Activated T-helper 2 cell treated with anti-CD3 and anti-CD28 coated beads, Interferon-gamma antibody, Interleukin-2, Interleukin-4, amounts not matched to agents 10 μg/mL and 5 μg/mL and 100 μg/mL, durations not matched to agents 14 hours and 24 hours and 36 hours (primary cell): ENCODE measurements at regions of chr21 and their contacts with region 1.

Region 1: DNA sequence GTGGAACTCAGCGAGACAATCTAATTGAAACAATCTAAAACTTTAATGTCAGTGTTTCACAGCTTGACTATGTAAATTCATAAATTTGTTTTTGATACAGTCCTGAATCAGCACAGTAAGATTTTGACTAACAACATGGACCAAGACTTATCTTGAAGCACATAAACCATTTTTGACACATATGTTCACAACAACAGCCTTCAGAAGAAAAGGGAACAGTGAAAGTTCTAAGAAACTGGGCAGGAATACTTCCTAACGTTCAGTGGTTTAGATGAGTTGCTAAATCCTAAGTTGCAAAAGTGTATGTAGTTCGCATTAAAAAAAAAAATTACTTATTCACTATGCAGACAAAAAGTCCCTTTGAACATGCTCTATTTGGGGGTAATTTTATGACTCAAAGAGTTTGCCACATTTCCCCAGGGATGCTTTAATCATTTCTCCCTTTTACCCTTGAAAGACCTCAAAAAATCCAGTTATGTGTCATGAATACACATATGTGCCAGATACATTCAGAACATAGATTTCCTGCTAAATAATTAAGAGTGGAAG is 120.2 kb downstream of the MRPL39 start:
- DNase-seq: no peak
- H3K4me3 Mint-ChIP-seq: peak overlapping the region; percentile 35
- H3K27ac Mint-ChIP-seq: peak overlapping the region; percentile 83
- H3K4me1 Mint-ChIP-seq: peaks cover 61% of the 10 kb centered on the region
- H3K27me3 Mint-ChIP-seq: no peaks in the 10 kb centered on the region

Region 2: DNA sequence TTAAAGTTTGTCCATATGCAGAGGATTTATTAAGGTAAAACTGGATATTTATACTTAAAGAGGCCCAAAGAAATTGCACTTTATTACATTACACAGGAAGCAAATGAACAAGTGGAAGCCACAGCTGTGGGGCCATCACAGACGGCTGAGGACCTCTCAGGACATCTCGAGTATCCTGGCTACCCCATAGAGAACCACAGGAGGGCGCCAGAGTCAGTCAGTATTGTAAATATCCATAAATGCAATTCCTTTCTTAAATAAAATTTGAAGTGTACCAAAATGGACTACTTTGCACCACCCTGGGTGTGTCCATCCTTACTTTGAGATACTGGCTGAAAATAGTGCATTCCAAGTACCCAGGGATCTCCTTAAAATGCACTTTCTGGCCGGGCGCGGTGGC is 137.1 kb before region 1 on chr21:
- intact Hi-C with region 1: no loop called
- DNase-seq: no peak
- H3K4me3 Mint-ChIP-seq: no peak overlapping the region
- H3K27ac Mint-ChIP-seq: no peak overlapping the region
- H3K4me1 Mint-ChIP-seq: peaks cover 2% of the 10 kb centered on the region
- H3K27me3 Mint-ChIP-seq: peaks cover 5% of the 10 kb centered on the region

Region 3: DNA sequence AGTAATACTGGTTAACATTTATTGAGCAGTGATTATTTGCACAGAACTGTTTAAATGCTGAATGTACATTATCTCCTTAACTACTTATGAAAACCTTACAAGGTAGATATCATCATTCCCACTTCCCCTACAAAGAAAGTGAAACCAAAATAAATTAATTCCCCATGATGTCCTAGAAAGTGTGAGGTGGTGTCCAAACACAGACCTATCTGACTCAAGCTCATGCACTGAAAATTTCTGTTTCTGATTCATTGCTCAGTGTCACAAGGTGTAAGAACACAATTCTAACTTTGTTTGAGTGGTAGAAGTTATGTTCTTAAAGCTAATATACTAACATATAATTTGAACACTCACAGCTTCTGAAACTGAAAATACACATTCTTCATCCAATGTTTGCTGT is 58.6 kb before region 1 on chr21:
- intact Hi-C with region 1: loop called (anchors 1 kb)
- DNase-seq: no peak
- H3K4me3 Mint-ChIP-seq: peak overlapping the region; percentile 40
- H3K27ac Mint-ChIP-seq: peak overlapping the region; percentile 53
- H3K4me1 Mint-ChIP-seq: peaks cover 47% of the 10 kb centered on the region
- H3K27me3 Mint-ChIP-seq: no peaks in the 10 kb centered on the region

Region 4: GRCh38 chr21:25464275-25464674 is 22.8 kb before region 1 on chr21:
- intact Hi-C with region 1: loop called (anchors 1 kb)
- DNase-seq: no peak
- H3K4me3 Mint-ChIP-seq: no peak overlapping the region
- H3K27ac Mint-ChIP-seq: peak overlapping the region; percentile 93
- H3K4me1 Mint-ChIP-seq: peaks cover 60% of the 10 kb centered on the region
- H3K27me3 Mint-ChIP-seq: no peaks in the 10 kb centered on the region

Region 5: DNA sequence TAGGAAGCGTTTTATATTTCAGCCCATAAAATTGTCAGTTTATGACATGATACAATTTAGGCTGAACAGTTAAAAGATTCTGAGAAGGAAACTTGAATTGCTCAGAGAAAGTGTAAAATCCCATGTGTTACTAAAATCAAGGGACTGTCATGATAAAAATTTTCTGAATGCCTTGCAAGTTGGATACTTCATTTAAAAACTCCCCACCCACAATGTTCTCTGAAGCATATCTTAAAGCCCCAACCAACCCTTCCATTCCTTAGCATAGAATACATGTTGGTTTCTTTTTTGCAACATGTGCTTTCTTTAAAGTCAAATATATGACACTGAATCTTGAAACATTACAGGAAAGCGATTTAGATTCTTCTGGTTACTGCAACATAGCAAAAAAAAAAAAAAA is 22.7 kb after region 1 on chr21:
- intact Hi-C with region 1: loop called (anchors 1 kb)
- DNase-seq: no peak
- H3K4me3 Mint-ChIP-seq: peak overlapping the region; percentile 27
- H3K27ac Mint-ChIP-seq: peak overlapping the region; percentile 63
- H3K4me1 Mint-ChIP-seq: peaks cover 51% of the 10 kb centered on the region
- H3K27me3 Mint-ChIP-seq: no peaks in the 10 kb centered on the region

Region 6: DNA sequence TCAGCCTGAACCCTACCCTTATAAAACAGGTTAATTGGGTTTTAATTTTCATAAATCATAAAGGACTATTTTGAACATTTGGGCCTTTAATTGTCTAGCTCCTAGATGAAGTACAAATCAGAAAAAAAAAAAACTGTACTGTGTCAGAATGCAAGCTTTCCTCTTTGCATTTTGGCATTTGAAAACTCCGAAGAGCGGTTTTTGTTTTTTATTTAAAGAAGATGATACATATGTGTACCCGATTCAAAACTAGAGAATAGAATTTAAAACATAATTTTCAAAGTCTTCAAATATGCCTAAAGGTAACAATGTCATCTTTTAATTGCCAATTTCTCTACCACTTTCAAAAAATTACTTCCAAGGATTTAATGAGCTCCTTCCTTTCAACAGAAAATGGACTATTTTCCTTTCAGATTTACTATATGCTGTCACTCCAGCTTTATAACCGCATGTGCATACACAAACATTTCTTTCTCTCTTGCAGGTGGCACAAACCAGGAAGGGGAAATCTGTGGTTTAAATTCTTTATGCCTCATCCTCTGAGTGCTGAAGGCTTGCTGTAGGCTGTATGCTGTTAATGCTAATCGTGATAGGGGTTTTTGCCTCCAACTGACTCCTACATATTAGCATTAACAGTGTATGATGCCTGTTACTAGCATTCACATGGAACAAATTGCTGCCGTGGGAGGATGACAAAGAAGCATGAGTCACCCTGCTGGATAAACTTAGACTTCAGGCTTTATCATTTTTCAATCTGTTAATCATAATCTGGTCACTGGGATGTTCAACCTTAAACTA is 86.5 kb after region 1 on chr21:
- intact Hi-C with region 1: loop called (anchors 1 kb)
- DNase-seq: peak; percentile 38
- H3K4me3 Mint-ChIP-seq: peak overlapping the region; percentile 77
- H3K27ac Mint-ChIP-seq: peak overlapping the region; percentile 93
- H3K4me1 Mint-ChIP-seq: peaks cover 76% of the 10 kb centered on the region
- H3K27me3 Mint-ChIP-seq: no peaks in the 10 kb centered on the region